ENCODE measurements at regions of chr5 and their contacts with region 1.

Region 1: GRCh38 chr5:108727651-108728565 is 19.8 kb upstream of the FER start:
- DNase-seq: peak; percentile 89

Region 2: GRCh38 chr5:108696951-108697715 is 30.8 kb before region 1 on chr5:
- CTCF ChIA-PET with region 1: no interaction called
- POLR2A ChIA-PET with region 1: interaction called, 17 read pairs
- DNase-seq: no peak

Region 3: GRCh38 chr5:108739906-108740305 is 12.0 kb after region 1 on chr5:
- CTCF ChIA-PET with region 1: no interaction called
- POLR2A ChIA-PET with region 1: interaction called, 18 read pairs
- DNase-seq: no peak

Region 4: GRCh38 chr5:108748401-108749127 is 20.7 kb after region 1 on chr5:
- CTCF ChIA-PET with region 1: interaction called, 4 read pairs
- POLR2A ChIA-PET with region 1: interaction called, 50 read pairs
- DNase-seq: peak; percentile 92

Region 5: DNA sequence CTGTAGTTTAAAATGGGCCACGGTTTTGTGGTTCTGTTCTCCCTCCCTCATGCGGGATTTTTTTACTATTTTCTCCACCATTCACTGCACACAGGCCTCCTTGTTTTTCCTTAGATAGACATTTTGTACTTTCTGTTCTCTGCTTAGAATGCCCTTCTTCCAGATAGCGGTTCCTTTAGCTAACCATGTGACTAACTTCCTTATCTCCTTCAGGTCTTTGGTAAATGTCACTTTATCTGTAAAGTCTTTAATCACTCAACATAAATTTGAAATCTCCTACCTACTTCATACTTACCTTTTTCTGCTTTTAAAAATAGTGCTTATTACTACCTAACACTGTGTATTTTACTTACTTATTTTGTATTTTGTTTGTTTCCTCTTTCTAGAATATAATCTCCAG is 34.8 kb after region 1 on chr5:
- CTCF ChIA-PET with region 1: no interaction called
- POLR2A ChIA-PET with region 1: interaction called, 10 read pairs
- DNase-seq: no peak

Measured in HEK293T (cell line).